PC-3 (cell line): ENCODE measurements at regions of chr7 and their contacts with region 1.

Region 1: DNA sequence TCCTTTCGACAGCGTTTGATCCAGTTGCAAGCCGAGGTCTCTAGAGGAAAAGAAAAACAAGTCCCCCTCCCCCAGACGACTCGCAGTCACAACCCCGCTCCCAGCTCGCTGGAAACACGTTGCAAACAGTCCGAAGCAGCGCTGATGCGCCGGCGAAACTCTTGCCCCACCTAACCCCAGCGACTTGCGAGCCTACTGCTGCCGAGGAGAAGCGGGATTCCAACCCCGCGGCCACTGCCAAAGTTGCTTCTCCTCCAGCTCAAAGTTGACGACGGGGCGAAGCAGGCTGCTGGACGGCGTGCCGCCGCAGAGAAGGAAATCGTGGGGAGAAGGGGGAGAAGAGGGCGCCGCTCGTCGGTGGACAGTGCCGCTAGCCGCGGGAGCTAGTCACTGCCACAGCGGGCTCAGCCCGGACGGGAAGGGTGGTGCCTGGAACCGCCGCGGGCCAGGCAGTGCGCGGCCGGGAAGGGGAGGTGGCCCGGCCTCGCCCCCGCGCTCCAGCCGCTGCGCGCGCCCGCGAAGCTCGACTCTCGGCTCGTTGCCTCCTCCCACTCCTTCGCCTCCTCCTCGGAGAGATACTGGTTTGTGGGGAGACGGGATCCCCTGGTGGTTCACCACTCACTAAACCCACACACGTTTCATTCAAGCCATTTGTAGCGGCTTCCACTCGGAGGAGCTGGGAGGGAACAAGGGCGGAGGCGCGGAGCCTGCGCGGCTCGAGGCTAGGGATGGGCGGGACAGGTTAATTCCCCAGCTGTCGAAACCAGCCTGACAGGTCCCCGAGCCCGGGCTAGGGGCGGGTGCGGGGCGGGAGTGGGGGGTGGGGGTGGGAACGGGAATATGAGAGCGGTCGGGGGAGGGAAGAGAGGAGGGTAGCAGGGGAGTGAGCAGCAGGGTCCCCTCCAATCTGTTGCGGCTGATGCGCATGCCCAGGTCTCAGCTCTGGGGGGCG is at the start of gene GPR37:
- DNase-seq: peak; percentile 86
- ATAC-seq: peak; percentile 88
- H3K4me3 ChIP-seq: peak within 1 kb of the TSS; percentile 92
- H3K27ac ChIP-seq: peak within 1 kb of the TSS; percentile 75
- H3K4me1 ChIP-seq: peaks cover 22% of the 10 kb centered on the region; the same call in 1 of the 2 replicates
- H3K27me3 ChIP-seq: no peaks in the 10 kb centered on the region
- CTCF ChIP-seq: peak; percentile 42
- total RNA-seq, gene GPR37: 10.5 and 14.3 TPM in 2 replicates

Region 2: DNA sequence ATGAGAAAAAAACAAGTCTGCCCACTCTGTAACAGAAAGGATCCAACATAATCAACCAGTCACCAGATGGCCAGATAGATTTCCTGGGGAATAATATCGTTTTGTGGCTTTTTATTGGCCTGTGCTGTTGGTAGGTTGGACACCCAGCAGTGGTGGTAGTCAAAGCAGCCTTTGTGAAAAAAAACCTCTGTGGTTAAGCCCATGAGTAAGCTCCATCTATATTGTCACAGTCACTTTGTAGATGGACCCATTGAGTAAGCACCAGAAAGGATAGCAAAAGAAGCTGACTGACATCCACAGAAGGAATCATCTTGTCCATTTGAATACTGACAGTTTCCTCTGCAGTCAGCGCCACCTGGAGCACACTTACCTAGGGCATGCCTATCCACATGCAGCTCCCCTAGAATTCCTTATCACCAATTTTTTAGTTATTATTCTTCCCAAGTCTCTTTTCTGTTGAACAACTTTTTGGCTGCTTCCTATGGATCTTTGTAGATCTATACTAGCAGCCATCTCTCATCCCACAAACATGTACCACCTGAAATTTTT is 1328.2 kb before region 1 on chr7:
- CTCF ChIA-PET with region 1: no interaction called
- POLR2A ChIA-PET with region 1: no interaction called
- intact Hi-C with region 1: no loop called
- DNase-seq: peak; percentile 78
- ATAC-seq: peak; percentile 37; the same call in 1 of the 2 replicates
- H3K4me3 ChIP-seq: no peak overlapping the region
- H3K27ac ChIP-seq: peak overlapping the region; percentile 77
- H3K4me1 ChIP-seq: peaks cover 22% of the 10 kb centered on the region
- H3K27me3 ChIP-seq: no peaks in the 10 kb centered on the region
- CTCF ChIP-seq: peak; percentile 33; the same call in 1 of the 2 replicates

Region 3: GRCh38 chr7:124152859-124153692 is 612.6 kb before region 1 on chr7:
- CTCF ChIA-PET with region 1: interaction called, 4 read pairs
- POLR2A ChIA-PET with region 1: no interaction called
- intact Hi-C with region 1: loop called (anchors 5 kb)
- DNase-seq: peak; percentile 67
- ATAC-seq: peak; percentile 86
- H3K4me3 ChIP-seq: no peak overlapping the region
- H3K27ac ChIP-seq: no peak overlapping the region
- H3K4me1 ChIP-seq: peaks cover 4% of the 10 kb centered on the region; the same call in 1 of the 2 replicates
- H3K27me3 ChIP-seq: no peaks in the 10 kb centered on the region
- CTCF ChIP-seq: peak; percentile 64

Region 4: DNA sequence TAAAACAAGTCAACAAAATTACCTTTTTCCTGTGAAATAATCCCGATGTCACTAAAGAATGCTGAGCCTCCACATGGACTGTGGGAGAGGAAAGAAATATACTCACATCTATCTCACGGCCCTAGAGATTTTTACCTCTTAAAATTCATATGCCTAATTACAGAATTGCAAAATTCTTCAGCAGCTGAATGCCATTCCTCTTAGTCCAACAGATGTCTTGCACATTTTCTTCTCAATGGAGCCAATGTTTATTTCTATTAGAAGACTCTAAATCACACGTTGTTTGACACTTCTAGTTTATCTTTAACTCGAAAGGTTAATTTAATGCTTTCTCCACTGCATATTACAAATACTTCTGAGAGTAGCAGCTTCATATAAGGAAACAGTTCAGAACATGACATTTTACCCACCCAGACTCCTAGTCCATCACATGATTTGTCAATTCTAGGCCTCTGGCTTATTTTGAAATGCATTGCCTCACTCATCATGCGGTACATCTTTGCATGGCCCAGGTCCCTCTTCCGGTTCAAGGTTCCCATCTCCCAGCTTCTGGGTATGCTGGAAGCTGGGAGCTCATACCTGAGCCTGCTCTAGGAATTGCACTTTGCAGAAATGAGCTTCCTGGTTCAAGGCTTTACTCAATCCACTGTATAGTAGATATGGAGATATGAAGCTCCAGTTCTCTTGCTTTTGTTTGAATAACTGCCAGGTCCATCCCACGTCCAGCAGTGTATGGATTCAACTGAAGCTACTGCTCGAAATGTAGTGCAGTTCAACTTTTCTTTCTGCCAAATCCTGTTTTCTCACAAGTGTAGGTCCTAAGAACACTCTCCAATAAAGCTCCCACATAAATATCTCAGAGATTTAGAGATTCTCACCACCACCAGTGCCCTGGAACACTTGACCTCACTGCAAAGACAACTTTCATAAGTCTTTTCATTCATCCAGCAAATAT is 306.3 kb before region 1 on chr7:
- CTCF ChIA-PET with region 1: no interaction called
- POLR2A ChIA-PET with region 1: interaction called, 3 read pairs
- intact Hi-C with region 1: loop called (anchors 5 kb)
- DNase-seq: no peak
- ATAC-seq: no peak
- H3K4me3 ChIP-seq: no peak overlapping the region
- H3K27ac ChIP-seq: no peak overlapping the region
- H3K4me1 ChIP-seq: peaks cover 20% of the 10 kb centered on the region
- H3K27me3 ChIP-seq: no peaks in the 10 kb centered on the region
- CTCF ChIP-seq: no peak

Region 5: DNA sequence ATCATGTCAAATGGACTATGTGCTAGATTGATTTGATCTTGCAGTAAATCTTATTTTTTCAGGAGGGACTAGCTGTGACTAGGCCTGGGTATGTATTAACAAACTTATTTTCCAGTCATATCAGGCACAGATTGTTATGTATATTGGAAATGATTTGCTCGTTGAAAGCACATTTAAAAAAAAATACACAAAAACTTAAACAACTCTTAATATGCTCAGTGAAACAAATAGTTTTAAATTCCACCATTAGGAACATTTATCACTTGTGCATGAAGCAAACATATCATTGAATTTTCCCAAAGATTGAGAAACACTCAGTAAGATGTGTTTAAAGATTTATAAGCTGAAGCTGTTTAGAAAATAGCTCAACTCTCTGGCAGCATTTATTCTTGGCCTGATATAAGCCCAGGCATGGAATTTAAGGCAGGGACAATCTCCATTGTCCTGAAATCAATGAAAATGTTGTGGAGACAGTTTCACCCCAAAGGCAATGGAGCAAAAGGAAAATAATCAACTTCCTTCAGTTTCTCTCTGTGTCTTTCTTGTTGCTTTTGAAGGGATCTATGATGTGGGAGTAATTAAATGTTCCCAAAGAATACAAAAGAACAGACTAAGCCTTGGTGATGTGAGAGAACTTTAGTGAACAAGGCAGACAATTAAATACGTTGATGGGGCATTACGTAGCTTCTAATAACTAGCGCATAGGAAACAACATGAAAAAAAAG is 250.4 kb before region 1 on chr7:
- CTCF ChIA-PET with region 1: no interaction called
- POLR2A ChIA-PET with region 1: no interaction called
- intact Hi-C with region 1: no loop called
- DNase-seq: no peak
- ATAC-seq: no peak
- H3K4me3 ChIP-seq: no peak overlapping the region
- H3K27ac ChIP-seq: no peak overlapping the region
- H3K4me1 ChIP-seq: no peaks in the 10 kb centered on the region
- H3K27me3 ChIP-seq: no peaks in the 10 kb centered on the region
- CTCF ChIP-seq: no peak

Region 6: DNA sequence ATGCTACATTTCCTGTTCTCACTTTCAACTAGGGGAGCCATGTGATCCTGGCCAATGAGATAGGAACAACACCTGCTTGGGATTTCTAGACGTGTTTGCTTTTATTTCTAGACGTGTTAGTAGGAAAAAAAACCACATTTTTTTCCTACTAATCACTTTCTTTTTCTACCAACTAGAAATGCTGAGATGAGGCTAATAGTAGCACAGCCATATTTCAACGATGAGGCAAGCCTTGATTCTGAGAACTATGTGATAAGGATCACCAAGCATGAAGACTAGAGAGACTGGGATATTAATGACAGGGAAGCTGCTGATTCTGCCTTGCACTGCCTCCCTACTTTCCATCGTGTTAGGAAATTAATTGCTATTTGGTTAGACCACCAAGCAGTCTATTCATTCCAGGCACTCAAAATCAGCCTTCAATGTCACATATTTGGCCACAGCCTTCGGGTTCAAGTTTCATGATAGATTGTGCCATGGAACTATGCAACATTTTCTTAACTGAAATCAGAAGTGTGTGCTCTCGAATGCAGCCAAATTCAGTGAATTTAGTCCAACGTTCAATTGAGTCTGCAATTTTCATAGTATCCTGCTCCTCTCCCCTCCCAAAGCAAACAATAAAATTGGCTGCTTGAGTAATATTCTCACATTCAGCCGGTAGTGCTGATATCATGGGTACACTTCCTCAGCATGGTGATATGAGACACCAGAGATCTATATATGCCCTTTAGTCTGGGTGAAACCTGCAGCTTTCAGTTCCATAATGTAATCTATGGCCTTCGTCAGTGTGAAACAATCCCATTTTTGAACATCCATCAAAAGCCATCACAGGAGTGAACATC is 98.1 kb before region 1 on chr7:
- CTCF ChIA-PET with region 1: interaction called, 10 read pairs
- POLR2A ChIA-PET with region 1: no interaction called
- intact Hi-C with region 1: loop called (anchors 2 kb)
- DNase-seq: peak; percentile 40
- ATAC-seq: peak; percentile 87
- H3K4me3 ChIP-seq: no peak overlapping the region
- H3K27ac ChIP-seq: no peak overlapping the region
- H3K4me1 ChIP-seq: peaks cover 13% of the 10 kb centered on the region
- H3K27me3 ChIP-seq: no peaks in the 10 kb centered on the region
- CTCF ChIP-seq: no peak

Region 7: DNA sequence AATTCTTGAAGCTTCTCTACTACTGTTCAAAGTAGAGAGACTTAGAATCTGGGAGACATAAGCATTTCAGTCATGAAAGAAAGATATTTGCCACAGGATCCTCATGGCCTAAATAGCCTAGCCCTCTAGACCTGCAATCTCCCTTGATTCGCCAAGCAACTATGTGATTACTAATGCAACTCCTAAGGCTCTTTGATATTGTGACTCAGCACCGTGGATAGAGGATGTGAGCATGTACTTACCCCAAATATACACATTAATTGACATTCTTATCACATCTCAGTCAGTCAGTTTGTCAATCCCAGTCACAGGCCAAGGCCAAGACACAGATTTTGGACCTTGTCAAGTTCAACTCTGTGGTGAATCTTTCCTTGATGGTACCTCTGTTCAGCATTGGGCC is 42.7 kb before region 1 on chr7:
- CTCF ChIA-PET with region 1: no interaction called
- POLR2A ChIA-PET with region 1: interaction called, 3 read pairs
- intact Hi-C with region 1: loop called (anchors 1 kb)
- DNase-seq: peak; percentile 88
- ATAC-seq: peak; percentile 63
- H3K4me3 ChIP-seq: peak overlapping the region; percentile 21; the same call in 1 of the 2 replicates
- H3K27ac ChIP-seq: peak overlapping the region; percentile 95
- H3K4me1 ChIP-seq: peaks cover 63% of the 10 kb centered on the region
- H3K27me3 ChIP-seq: no peaks in the 10 kb centered on the region
- CTCF ChIP-seq: no peak